CD14-positive monocyte (primary cell): ENCODE measurements at regions of chr17 and their contacts with region 1.

Region 1: GRCh38 chr17:77429919-77430752 is 289.4 kb downstream of the SEC14L1 start:
- DNase-seq: peak; percentile 65 to 73 (median 65)
- H3K4me3 ChIP-seq: peak overlapping the region in 1 of 3 experiments; percentile 55
- H3K4me3 Mint-ChIP-seq: peak overlapping the region; percentile 56 to 84
- H3K27ac ChIP-seq: peak overlapping the region; percentile 53 to 67
- H3K27ac Mint-ChIP-seq: peak overlapping the region; percentile 75 to 95 (median 89)
- H3K4me1 ChIP-seq: peaks cover 83 to 88% of the 10 kb centered on the region in 2 donors
- H3K4me1 Mint-ChIP-seq: peaks cover 84% of the 10 kb centered on the region
- H3K27me3 ChIP-seq: no peaks in the 10 kb centered on the region
- H3K27me3 Mint-ChIP-seq: peaks cover 0 to 3% (median 0%) of the 10 kb centered on the region in 3 donors
- CTCF ChIP-seq: peak; percentile 96

Region 2: GRCh38 chr17:77372444-77373298 is 57.5 kb before region 1 on chr17:
- intact Hi-C with region 1: no loop called
- DNase-seq: peak; percentile 48 to 56 (median 52)
- H3K4me3 ChIP-seq: peak overlapping the region; percentile 73 to 100 (median 74)
- H3K4me3 Mint-ChIP-seq: peak overlapping the region; percentile 71 to 84
- H3K27ac ChIP-seq: peak overlapping the region in 1 of 2 donors; percentile 89
- H3K27ac Mint-ChIP-seq: peak overlapping the region in 2 of 7 donors; percentile 43 to 68
- H3K4me1 ChIP-seq: peaks cover 41 to 58% of the 10 kb centered on the region in 2 donors
- H3K4me1 Mint-ChIP-seq: peaks cover 50% of the 10 kb centered on the region
- H3K27me3 ChIP-seq: no peaks in the 10 kb centered on the region
- H3K27me3 Mint-ChIP-seq: peaks cover 4 to 9% (median 8%) of the 10 kb centered on the region in 3 donors
- CTCF ChIP-seq: no peak

Region 3: GRCh38 chr17:77465358-77466041 is 35.4 kb after region 1 on chr17:
- intact Hi-C with region 1: loop called (anchors 5 kb)
- DNase-seq: peak; percentile 93 to 96 (median 94)
- H3K4me3 ChIP-seq: peak overlapping the region in 2 of 3 experiments; percentile 24 to 59
- H3K4me3 Mint-ChIP-seq: peak overlapping the region; percentile 73 to 75
- H3K27ac ChIP-seq: peak overlapping the region; percentile 87 to 96
- H3K27ac Mint-ChIP-seq: peak overlapping the region; percentile 88 to 99 (median 97)
- H3K4me1 ChIP-seq: peaks cover 78 to 86% of the 10 kb centered on the region in 2 donors
- H3K4me1 Mint-ChIP-seq: peaks cover 84% of the 10 kb centered on the region
- H3K27me3 ChIP-seq: no peaks in the 10 kb centered on the region
- H3K27me3 Mint-ChIP-seq: peaks cover 0 to 1% (median 0%) of the 10 kb centered on the region in 3 donors
- CTCF ChIP-seq: no peak

Region 4: DNA sequence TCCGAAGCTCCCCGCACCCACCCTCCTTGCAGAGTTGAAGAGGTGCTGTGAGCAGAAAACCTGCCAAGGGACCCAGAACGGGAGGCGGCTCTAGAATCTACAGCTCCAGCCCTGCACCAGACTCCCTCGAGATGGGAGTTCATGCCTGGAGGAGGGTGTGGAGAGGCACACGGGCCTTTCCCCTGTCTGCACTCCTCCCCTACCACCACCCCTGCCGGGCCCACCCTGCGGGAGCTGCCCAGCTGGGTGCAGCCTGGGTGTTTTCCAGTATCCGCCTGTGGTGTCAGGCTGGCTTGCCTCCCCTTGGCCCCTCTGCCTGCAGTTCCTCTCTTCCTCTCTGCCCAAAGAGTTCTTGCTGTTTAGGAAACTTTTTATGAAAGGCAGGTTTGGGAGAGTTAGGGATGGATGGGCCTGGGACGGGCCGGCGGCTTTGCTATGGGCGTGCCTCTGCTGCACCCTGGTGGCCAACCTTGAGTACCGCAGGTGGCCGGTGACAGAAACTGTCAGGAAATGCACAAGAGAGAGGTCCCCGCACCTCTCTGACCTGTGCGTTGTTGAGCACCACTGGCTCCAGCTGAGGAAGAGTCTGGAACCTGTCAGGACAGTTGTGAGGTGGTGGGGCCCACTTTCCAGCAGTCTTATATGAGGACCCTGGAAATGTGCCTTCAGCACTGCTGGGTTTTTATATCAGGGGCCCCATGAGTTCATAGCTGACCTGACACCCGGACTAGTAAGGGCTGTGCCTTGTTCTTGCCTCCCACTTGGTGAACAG is 64.7 kb after region 1 on chr17:
- intact Hi-C with region 1: loop called (anchors 2 to 5 kb)
- DNase-seq: peak; percentile 62 to 75 (median 69)
- H3K4me3 ChIP-seq: no peak overlapping the region
- H3K4me3 Mint-ChIP-seq: no peak overlapping the region
- H3K27ac ChIP-seq: peak overlapping the region in 1 of 2 donors; percentile 70
- H3K27ac Mint-ChIP-seq: peak overlapping the region in 4 of 7 donors; percentile 46 to 80 (median 63)
- H3K4me1 ChIP-seq: peaks cover 29 to 35% of the 10 kb centered on the region in 2 donors
- H3K4me1 Mint-ChIP-seq: peaks cover 33% of the 10 kb centered on the region
- H3K27me3 ChIP-seq: no peaks in the 10 kb centered on the region
- H3K27me3 Mint-ChIP-seq: no peaks in the 10 kb centered on the region
- CTCF ChIP-seq: peak; percentile 96

Region 5: GRCh38 chr17:77542551-77543490 is 112.7 kb after region 1 on chr17:
- intact Hi-C with region 1: no loop called
- DNase-seq: peak; percentile 40 to 60 (median 56)
- H3K4me3 ChIP-seq: no peak overlapping the region
- H3K4me3 Mint-ChIP-seq: no peak overlapping the region
- H3K27ac ChIP-seq: no peak overlapping the region
- H3K27ac Mint-ChIP-seq: no peak overlapping the region
- H3K4me1 ChIP-seq: no peaks in the 10 kb centered on the region
- H3K4me1 Mint-ChIP-seq: peaks cover 20% of the 10 kb centered on the region
- H3K27me3 ChIP-seq: no peaks in the 10 kb centered on the region
- H3K27me3 Mint-ChIP-seq: peaks cover 8 to 16% (median 9%) of the 10 kb centered on the region in 3 donors
- CTCF ChIP-seq: peak; percentile 83